Activated CD8-positive, alpha-beta T cell treated with anti-CD3 and anti-CD28 coated beads for 36 hours (primary cell): ENCODE measurements at regions of chr19 and their contacts with region 1.

Region 1: GRCh38 chr19:49889687-49890348 is 6.9 kb downstream of the IL4I1 start:
- DNase-seq: peak; percentile 83
- ATAC-seq: peak; percentile 68
- H3K4me3 Mint-ChIP-seq: peak overlapping the region; percentile 68
- H3K27ac Mint-ChIP-seq: peak overlapping the region; percentile 76
- H3K4me1 Mint-ChIP-seq: peaks cover 31% of the 10 kb centered on the region
- H3K27me3 Mint-ChIP-seq: no peaks in the 10 kb centered on the region
- CTCF ChIP-seq: peak; percentile 87

Region 2: GRCh38 chr19:49832556-49832955 is 57.3 kb before region 1 on chr19:
- CTCF ChIA-PET with region 1: no interaction called
- POLR2A ChIA-PET with region 1: no interaction called
- intact Hi-C with region 1: no loop called
- DNase-seq: no peak
- ATAC-seq: no peak
- H3K4me3 Mint-ChIP-seq: no peak overlapping the region
- H3K27ac Mint-ChIP-seq: no peak overlapping the region
- H3K4me1 Mint-ChIP-seq: no peaks in the 10 kb centered on the region
- H3K27me3 Mint-ChIP-seq: no peaks in the 10 kb centered on the region
- CTCF ChIP-seq: no peak

Region 3: DNA sequence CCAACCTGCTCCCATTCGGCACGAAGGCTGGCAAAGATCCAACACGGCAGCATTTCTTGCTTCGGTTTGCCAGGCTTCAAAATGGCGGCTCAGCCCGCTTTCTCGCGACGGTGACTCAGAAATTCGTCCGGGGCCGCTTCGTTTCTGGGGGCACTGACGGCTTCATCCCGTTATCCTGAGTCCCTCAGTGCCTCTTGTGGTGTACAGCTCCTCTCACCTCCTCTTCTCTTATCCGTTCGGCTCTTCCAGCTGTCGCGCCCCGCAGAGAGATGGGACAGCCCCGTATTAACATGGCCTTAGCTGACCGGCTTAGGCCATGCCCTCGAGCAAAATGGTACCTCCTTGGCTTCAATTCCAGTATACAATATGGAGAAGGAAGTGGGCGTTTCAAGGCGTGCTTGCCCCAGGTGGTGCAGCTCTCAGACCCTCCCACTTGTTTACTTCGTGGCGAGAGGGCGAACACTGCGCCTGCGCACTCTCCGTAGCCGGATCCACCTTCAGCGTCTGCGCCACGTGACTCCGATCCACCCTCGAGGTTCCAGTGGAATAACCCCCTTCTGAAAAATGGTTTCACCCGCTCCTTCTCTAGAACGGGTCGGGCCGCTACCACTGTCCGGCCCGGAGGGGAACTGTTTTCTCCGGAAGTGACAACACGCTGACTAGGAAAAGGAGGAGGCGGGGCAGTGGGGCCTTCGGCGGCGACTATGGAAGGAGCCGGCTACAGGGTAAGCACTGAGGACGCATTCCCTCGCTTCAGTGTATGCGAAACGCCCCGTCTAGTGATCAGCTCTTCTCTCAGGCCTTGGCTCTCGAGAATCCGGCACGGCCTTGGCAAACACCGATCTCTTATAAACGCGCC is 12.6 kb before region 1 on chr19 and contains the starts of genes AKT1S1 and TBC1D17:
- CTCF ChIA-PET with region 1: interaction called, 10 read pairs
- POLR2A ChIA-PET with region 1: interaction called, 9 read pairs
- intact Hi-C with region 1: no loop called
- DNase-seq: peak; percentile 99
- ATAC-seq: peak; percentile 70
- H3K4me3 Mint-ChIP-seq: no peak within 1 kb of the TSS
- H3K27ac Mint-ChIP-seq: no peak within 1 kb of the TSS
- H3K4me1 Mint-ChIP-seq: peaks cover 17% of the 10 kb centered on the region
- H3K27me3 Mint-ChIP-seq: no peaks in the 10 kb centered on the region
- CTCF ChIP-seq: no peak
- total RNA-seq, gene AKT1S1: 17.5 to 19.5 TPM
- total RNA-seq, gene TBC1D17: 26.6 to 26.8 TPM

Region 4: DNA sequence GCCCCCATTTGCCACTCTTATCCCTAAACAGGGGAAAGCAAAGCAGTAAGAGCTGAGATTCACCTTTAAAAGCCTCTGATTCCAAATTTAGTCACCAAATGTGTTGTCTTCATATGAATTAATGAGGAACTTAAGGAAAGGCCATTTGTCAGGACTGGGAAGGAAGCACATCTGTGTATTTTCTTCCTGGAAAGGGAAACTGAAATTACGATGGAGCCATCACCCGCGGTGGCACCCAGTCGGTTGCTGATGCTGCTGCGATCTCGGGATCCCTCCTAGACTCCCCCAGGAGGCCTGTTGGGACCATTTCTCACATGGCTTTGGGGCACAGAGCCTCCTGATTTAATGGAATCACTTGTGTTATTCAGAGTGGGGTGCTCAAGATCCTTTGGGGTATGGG is 14.3 kb after region 1 on chr19:
- CTCF ChIA-PET with region 1: interaction called, 10 read pairs
- POLR2A ChIA-PET with region 1: interaction called, 3 read pairs
- intact Hi-C with region 1: no loop called
- DNase-seq: no peak
- ATAC-seq: no peak
- H3K4me3 Mint-ChIP-seq: peak overlapping the region; percentile 12
- H3K27ac Mint-ChIP-seq: peak overlapping the region; percentile 55
- H3K4me1 Mint-ChIP-seq: peaks cover 50% of the 10 kb centered on the region
- H3K27me3 Mint-ChIP-seq: no peaks in the 10 kb centered on the region
- CTCF ChIP-seq: no peak

Region 5: DNA sequence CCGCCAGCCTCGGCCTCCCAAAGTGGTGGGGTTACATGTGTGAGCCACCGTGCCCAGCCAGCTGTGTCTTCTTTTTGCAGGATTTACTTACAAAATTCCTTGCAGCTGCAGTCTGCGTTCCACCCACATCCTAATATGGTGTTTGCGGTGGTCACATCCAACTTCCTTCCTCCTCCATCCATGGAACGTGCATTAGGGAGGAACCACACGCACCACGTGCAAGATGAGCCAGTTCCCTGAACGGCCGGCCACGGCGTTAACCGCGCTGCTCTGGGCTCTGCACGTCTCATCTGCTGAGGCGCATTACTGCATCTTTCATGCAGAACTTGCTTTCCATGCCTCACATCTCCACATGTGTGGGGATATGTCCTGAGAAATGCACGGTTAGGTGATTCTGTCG is 84.2 kb after region 1 on chr19:
- CTCF ChIA-PET with region 1: no interaction called
- POLR2A ChIA-PET with region 1: no interaction called
- intact Hi-C with region 1: no loop called
- DNase-seq: no peak
- ATAC-seq: no peak
- H3K4me3 Mint-ChIP-seq: no peak overlapping the region
- H3K27ac Mint-ChIP-seq: no peak overlapping the region
- H3K4me1 Mint-ChIP-seq: no peaks in the 10 kb centered on the region
- H3K27me3 Mint-ChIP-seq: peaks cover 2% of the 10 kb centered on the region
- CTCF ChIP-seq: no peak